Right ventricle myocardium superior (tissue), 1 donor: ENCODE measurements at regions of chr1 and their contacts with region 1.

Region 1: GRCh38 chr1:112955781-112956543 is at the start of gene SLC16A1:
- DNase-seq: peak; percentile 97
- ATAC-seq: peak; percentile 95
- total RNA-seq, gene SLC16A1: 130 TPM

Region 2: DNA sequence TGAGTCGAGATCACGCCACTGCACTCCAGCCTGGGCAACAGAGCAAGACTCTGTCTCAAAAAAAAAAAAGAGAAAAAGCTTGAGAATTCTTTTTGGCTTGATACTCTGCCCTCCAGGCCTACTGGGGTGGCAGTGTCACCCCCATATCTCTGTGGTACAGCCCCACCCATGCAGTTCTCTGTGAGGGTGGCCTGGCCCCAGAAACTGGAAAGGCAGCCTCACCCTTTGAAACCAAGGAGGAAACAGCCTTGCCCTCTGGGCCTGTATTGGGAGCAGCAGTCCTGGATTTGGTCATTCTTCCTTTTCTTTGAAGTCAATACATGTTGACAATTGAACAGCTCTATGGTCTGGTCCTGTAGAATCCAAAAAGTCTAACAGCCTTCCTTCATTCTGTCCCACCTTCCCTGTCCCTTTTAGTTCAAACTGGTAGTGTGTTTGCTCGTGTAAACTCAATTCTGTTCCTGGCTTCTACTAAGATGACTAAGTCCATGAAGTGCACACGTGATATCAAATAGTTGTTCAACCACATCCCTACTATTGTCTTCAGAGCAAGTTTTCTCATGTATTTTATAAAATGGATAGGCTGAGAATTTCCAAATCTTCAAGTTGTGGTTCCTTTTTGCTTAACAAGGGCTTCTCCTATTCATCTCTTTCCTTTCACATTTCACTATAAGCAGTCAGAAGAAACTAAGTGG is 350.2 kb before region 1 on chr1:
- intact Hi-C with region 1: no loop called
- DNase-seq: no peak
- ATAC-seq: no peak

Region 3: DNA sequence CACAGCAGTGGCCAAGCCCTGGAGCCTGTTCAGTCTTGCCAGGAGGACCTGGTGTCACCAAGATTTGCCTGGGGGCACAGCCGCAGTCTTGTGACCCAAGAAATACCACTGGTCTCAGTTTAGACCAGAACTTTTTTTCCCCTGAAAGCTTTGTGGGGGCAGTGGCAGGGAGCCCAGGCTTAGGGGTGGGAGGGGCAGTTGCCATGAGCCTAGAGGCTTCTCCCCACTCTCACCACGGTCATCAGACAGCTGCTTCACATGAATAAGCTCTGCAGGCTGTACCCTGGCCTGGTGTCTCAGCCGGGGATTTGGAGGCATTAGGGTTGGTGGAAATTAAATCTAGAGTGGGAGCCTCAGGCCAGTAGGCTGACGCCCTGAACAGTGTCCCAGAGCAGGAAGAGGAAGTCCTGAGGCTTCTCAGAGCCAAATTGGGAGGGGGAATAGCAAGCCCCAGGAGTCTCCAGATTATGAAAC is 73.7 kb before region 1 on chr1:
- intact Hi-C with region 1: loop called (anchors 5 kb)
- DNase-seq: no peak
- ATAC-seq: peak; percentile 74

Region 4: GRCh38 chr1:112998592-112999235 is 42.8 kb after region 1 on chr1:
- intact Hi-C with region 1: loop called (anchors 5 kb)
- DNase-seq: peak; percentile 78
- ATAC-seq: peak; percentile 86